ENCODE measurements at regions of chr1 and their contacts with region 1.

Region 1: DNA sequence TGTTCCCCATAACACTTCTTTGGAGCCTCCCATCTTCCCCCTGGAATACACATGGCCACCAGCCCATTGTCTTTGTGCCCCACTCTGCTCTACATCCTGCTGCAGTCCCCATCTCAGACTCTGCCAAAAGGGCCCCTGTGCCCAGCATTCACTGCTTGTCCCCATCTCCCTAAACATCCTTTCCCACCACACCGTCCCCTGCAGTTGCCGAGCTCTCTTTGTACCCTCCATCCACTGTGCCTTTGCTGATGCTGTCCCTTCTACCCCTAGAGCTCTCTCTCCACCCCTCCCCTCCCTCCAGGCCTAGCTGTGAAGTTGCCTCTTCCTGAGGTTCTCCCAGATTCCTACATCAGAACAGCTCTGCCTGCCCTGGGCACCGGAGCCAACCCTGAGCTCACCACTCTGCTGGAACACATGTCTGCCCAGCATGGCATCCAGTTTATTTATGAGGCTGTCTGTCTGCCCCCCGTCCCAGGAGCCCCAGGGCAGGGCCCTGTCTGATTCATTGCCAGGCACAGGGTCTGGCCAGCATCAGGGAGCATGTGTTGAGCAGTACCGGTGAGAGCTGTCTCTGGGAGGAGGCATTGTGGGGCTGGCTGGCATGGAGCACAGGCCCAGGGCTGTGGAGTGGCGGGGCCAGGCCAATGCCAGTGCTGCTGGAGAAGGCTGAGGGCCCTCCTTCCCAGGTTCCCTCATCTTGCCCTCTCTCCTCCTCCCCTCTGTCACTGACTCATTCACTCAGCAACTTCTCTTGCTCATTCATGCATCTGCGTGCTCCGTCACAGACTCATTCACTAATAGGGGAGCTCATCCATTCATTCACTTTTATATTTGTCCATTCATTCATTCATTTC is 28.8 kb downstream of the EDN2 start:
- DNase-seq: no peak
- H3K4me3 ChIP-seq: no peak overlapping the region
- CTCF ChIP-seq: no peak

Region 2: GRCh38 chr1:41109316-41110197 is 346.1 kb before region 1 on chr1:
- CTCF ChIA-PET with region 1: no interaction called
- POLR2A ChIA-PET with region 1: no interaction called
- DNase-seq: peak; percentile 67
- H3K4me3 ChIP-seq: peak overlapping the region; percentile 28; the same call in 1 of the 2 replicates
- CTCF ChIP-seq: no peak

Region 3: GRCh38 chr1:41241782-41242341 is 213.8 kb before region 1 on chr1 and contains the start of gene SCMH1:
- CTCF ChIA-PET with region 1: no interaction called
- POLR2A ChIA-PET with region 1: no interaction called
- DNase-seq: no peak
- H3K4me3 ChIP-seq: peak within 1 kb of the TSS; percentile 67
- CTCF ChIP-seq: no peak

Region 4: DNA sequence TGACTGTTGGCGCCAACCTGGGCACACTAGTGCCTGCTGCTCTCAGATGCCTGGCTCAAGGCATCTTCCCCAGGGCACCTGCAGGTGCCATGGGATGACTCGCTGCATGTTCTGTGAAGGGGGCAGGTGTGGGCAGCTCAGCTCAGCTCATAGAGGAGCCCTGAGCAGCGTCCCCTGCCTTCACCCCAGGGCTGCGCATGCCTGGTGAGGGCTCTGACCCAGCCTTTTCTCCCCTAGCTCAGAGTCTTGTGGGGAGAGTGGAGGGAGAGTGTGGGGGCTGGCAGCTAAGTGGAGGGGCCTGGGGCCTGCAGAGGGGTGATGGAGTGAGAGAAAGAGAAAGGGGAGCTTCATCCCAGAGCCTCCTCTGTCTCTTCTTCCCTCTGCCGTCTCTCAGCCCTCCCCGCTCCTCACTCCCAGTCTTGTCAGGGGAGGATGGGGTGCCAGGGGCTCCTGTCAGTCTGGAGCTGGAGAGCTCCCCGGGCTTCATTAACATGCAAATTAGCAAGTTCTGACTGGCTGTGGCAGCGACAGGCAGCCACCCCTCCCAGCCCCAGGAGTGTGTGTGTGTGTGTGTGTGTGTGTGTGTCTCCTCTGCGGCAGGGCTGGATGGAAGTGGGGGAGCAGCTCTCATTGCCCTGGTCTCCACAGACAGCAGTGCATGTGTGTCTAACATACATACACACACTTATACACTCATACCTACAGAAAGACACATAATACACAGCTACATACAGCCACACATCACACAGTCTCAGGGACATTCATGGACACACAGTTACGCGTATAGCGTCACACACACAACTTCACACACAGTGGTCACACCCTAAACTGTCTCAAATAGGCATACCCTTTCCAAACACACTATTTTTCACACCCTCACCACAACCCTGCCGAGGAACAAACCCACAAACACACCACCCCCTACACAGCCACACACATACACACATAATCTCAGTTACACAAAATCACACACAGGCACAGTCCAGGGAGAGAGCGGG is 60.4 kb before region 1 on chr1:
- CTCF ChIA-PET with region 1: no interaction called
- POLR2A ChIA-PET with region 1: no interaction called
- DNase-seq: no peak
- H3K4me3 ChIP-seq: no peak overlapping the region
- CTCF ChIP-seq: no peak

Region 5: GRCh38 chr1:41474490-41475271 is 19.0 kb after region 1 on chr1:
- CTCF ChIA-PET with region 1: interaction called, 11 read pairs
- POLR2A ChIA-PET with region 1: no interaction called
- DNase-seq: no peak
- H3K4me3 ChIP-seq: no peak overlapping the region
- CTCF ChIP-seq: no peak

Region 6: GRCh38 chr1:41529621-41530395 is 74.1 kb after region 1 on chr1:
- CTCF ChIA-PET with region 1: no interaction called
- POLR2A ChIA-PET with region 1: no interaction called
- DNase-seq: no peak
- H3K4me3 ChIP-seq: no peak overlapping the region
- CTCF ChIP-seq: no peak

Measured in AG04449 (cell line).